ENCODE measurements at regions of chr18 and their contacts with region 1.

Region 1: GRCh38 chr18:22342625-22343024 is 75.1 kb downstream of the CTAGE1 start:
- DNase-seq: peak; percentile 38 to 74
- ATAC-seq: peak; percentile 15 to 28 (median 23)
- H3K4me3 ChIP-seq: no peak overlapping the region
- H3K4me3 Mint-ChIP-seq: peak overlapping the region; percentile 61
- H3K27ac ChIP-seq: peak overlapping the region; percentile 94
- H3K27ac Mint-ChIP-seq: peak overlapping the region; percentile 92 to 97
- H3K4me1 ChIP-seq: peaks cover 87% of the 10 kb centered on the region
- H3K4me1 Mint-ChIP-seq: peaks cover 77 to 89% of the 10 kb centered on the region in 2 donors
- H3K27me3 ChIP-seq: no peaks in the 10 kb centered on the region
- H3K27me3 Mint-ChIP-seq: no peaks in the 10 kb centered on the region
- CTCF ChIP-seq: no peak

Region 2: GRCh38 chr18:21444465-21445023 is 898.1 kb before region 1 on chr18:
- intact Hi-C with region 1: no loop called
- DNase-seq: peak in 1 of 2 donors; percentile 7
- ATAC-seq: no peak
- H3K4me3 ChIP-seq: no peak overlapping the region
- H3K4me3 Mint-ChIP-seq: no peak overlapping the region
- H3K27ac ChIP-seq: no peak overlapping the region
- H3K27ac Mint-ChIP-seq: no peak overlapping the region
- H3K4me1 ChIP-seq: no peaks in the 10 kb centered on the region
- H3K4me1 Mint-ChIP-seq: no peaks in the 10 kb centered on the region
- H3K27me3 ChIP-seq: no peaks in the 10 kb centered on the region
- H3K27me3 Mint-ChIP-seq: peaks cover 11 to 30% of the 10 kb centered on the region in 2 donors
- CTCF ChIP-seq: no peak

Region 3: GRCh38 chr18:22257022-22257543 is 85.5 kb before region 1 on chr18:
- intact Hi-C with region 1: loop called (anchors 1 kb)
- DNase-seq: no peak
- ATAC-seq: no peak
- H3K4me3 ChIP-seq: no peak overlapping the region
- H3K4me3 Mint-ChIP-seq: no peak overlapping the region
- H3K27ac ChIP-seq: no peak overlapping the region
- H3K27ac Mint-ChIP-seq: peak overlapping the region in 1 of 2 donors; percentile 48
- H3K4me1 ChIP-seq: peaks cover 33% of the 10 kb centered on the region
- H3K4me1 Mint-ChIP-seq: peaks cover 45 to 57% of the 10 kb centered on the region in 2 donors
- H3K27me3 ChIP-seq: no peaks in the 10 kb centered on the region
- H3K27me3 Mint-ChIP-seq: peaks cover 28 to 34% of the 10 kb centered on the region in 2 donors
- CTCF ChIP-seq: no peak

Region 4: GRCh38 chr18:22439447-22439846 is 96.8 kb after region 1 on chr18:
- intact Hi-C with region 1: no loop called
- DNase-seq: no peak
- ATAC-seq: peak in 1 of 3 donors; percentile 46
- H3K4me3 ChIP-seq: no peak overlapping the region
- H3K4me3 Mint-ChIP-seq: no peak overlapping the region
- H3K27ac ChIP-seq: no peak overlapping the region
- H3K27ac Mint-ChIP-seq: no peak overlapping the region
- H3K4me1 ChIP-seq: no peaks in the 10 kb centered on the region
- H3K4me1 Mint-ChIP-seq: peaks cover 3 to 8% of the 10 kb centered on the region in 2 donors
- H3K27me3 ChIP-seq: no peaks in the 10 kb centered on the region
- H3K27me3 Mint-ChIP-seq: peaks cover 8 to 14% of the 10 kb centered on the region in 2 donors
- CTCF ChIP-seq: no peak

Region 5: GRCh38 chr18:22465859-22466457 is 123.3 kb after region 1 on chr18:
- intact Hi-C with region 1: loop called (anchors 2 kb)
- DNase-seq: peak; percentile 50 to 71
- ATAC-seq: peak; percentile 96 to 100 (median 97)
- H3K4me3 ChIP-seq: no peak overlapping the region
- H3K4me3 Mint-ChIP-seq: peak overlapping the region; percentile 86
- H3K27ac ChIP-seq: no peak overlapping the region
- H3K27ac Mint-ChIP-seq: peak overlapping the region; percentile 83 to 86
- H3K4me1 ChIP-seq: peaks cover 24% of the 10 kb centered on the region
- H3K4me1 Mint-ChIP-seq: peaks cover 43 to 49% of the 10 kb centered on the region in 2 donors
- H3K27me3 ChIP-seq: no peaks in the 10 kb centered on the region
- H3K27me3 Mint-ChIP-seq: peaks cover 11 to 15% of the 10 kb centered on the region in 2 donors
- CTCF ChIP-seq: no peak